ENCODE measurements at regions of chr15 and their contacts with region 1.

Region 1: DNA sequence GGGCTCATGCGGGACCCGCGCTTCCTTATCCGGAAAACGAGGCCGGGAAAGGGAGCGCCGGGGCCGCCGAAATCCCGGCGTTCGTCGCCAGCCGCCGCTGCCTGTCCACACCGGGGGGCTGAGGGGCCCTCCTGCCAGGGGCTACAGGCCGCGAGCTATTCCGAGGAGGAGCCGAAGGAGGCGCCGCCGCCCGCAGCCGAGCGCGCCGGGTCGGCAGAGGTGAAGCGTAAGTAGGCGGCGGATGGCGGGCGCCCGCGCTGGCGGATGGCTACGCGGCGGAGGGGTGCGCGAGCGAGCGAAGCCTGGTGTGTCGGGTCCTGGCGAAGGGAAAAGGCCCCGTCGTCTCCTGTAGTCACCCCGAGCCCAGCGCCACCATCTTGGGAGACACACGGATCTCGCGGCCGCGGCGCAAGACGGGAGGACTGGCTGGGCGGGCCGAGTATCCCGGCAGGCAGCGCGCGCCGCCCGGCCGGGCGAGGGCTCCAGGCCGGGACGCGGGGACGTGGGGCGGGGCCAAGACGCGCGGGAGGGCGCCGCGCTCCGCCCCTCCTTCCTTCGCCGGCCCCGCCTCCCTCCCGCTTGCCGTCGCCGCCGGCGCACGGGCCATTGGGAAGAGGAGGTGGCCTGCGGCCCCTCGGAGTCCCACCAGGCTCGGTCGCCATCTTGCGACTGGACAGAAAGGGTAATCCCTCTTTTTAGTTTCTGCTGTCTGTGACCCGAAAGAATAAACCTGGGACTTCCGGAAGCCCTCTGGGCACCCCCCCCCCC is at the start of gene UBE3A:
- DNase-seq: peak; percentile 60 to 94
- H3K4me3 ChIP-seq: peak within 1 kb of the TSS; percentile 93 to 99
- H3K27ac ChIP-seq: peak within 1 kb of the TSS; percentile 98 to 100
- H3K4me1 ChIP-seq: peaks cover 0 to 32% of the 10 kb centered on the region in 2 donors
- H3K27me3 ChIP-seq: no peaks in the 10 kb centered on the region
- CTCF ChIP-seq: peak; percentile 8 to 43 (median 17)
- total RNA-seq, gene UBE3A: 34.1 TPM

Region 2: GRCh38 chr15:25345943-25346342 is 92.8 kb before region 1 on chr15:
- intact Hi-C with region 1: loop called (anchors 2 kb)
- DNase-seq: peak; percentile 20 to 68
- H3K4me3 ChIP-seq: no peak overlapping the region
- H3K27ac ChIP-seq: peak overlapping the region; percentile 12 to 41
- H3K4me1 ChIP-seq: peaks cover 0 to 11% of the 10 kb centered on the region in 2 donors
- H3K27me3 ChIP-seq: no peaks in the 10 kb centered on the region
- CTCF ChIP-seq: peak in 1 of 3 experiments; percentile 51

Region 3: GRCh38 chr15:25362545-25362944 is 76.2 kb before region 1 on chr15:
- intact Hi-C with region 1: loop called (anchors 1 kb)
- DNase-seq: no peak
- H3K4me3 ChIP-seq: no peak overlapping the region
- H3K27ac ChIP-seq: peak overlapping the region; percentile 48 to 68
- H3K4me1 ChIP-seq: peaks cover 0 to 12% of the 10 kb centered on the region in 2 donors
- H3K27me3 ChIP-seq: no peaks in the 10 kb centered on the region
- CTCF ChIP-seq: no peak

Region 4: DNA sequence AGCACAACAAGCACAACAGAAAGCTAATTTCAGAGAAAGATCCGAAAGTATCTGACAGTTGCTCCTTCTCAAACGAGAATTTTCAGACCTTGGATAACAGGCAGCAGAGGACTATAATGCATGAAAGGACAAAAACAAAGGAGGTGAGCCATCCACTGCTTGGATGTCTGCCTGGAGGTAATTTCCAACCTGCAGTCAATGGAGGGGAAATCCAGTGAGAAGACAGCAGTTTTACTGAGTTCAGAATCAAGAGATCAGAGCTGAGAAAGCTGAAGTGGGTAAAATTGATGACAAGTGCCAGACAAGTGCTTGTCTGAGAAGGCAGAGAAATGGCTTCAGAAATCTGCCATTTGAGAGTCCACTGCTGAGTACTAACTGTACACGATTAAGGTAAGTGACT is 22.1 kb before region 1 on chr15:
- intact Hi-C with region 1: no loop called
- DNase-seq: no peak
- H3K4me3 ChIP-seq: no peak overlapping the region
- H3K27ac ChIP-seq: no peak overlapping the region
- H3K4me1 ChIP-seq: no peaks in the 10 kb centered on the region
- H3K27me3 ChIP-seq: no peaks in the 10 kb centered on the region
- CTCF ChIP-seq: no peak

Region 5: GRCh38 chr15:25790000-25790660 is 351.3 kb after region 1 on chr15:
- intact Hi-C with region 1: loop called (anchors 10 kb)
- DNase-seq: peak in 1 of 2 donors; percentile 84
- H3K4me3 ChIP-seq: no peak overlapping the region
- H3K27ac ChIP-seq: peak overlapping the region; percentile 64 to 71
- H3K4me1 ChIP-seq: peaks cover 8 to 41% of the 10 kb centered on the region in 2 donors
- H3K27me3 ChIP-seq: no peaks in the 10 kb centered on the region
- CTCF ChIP-seq: no peak

Region 6: DNA sequence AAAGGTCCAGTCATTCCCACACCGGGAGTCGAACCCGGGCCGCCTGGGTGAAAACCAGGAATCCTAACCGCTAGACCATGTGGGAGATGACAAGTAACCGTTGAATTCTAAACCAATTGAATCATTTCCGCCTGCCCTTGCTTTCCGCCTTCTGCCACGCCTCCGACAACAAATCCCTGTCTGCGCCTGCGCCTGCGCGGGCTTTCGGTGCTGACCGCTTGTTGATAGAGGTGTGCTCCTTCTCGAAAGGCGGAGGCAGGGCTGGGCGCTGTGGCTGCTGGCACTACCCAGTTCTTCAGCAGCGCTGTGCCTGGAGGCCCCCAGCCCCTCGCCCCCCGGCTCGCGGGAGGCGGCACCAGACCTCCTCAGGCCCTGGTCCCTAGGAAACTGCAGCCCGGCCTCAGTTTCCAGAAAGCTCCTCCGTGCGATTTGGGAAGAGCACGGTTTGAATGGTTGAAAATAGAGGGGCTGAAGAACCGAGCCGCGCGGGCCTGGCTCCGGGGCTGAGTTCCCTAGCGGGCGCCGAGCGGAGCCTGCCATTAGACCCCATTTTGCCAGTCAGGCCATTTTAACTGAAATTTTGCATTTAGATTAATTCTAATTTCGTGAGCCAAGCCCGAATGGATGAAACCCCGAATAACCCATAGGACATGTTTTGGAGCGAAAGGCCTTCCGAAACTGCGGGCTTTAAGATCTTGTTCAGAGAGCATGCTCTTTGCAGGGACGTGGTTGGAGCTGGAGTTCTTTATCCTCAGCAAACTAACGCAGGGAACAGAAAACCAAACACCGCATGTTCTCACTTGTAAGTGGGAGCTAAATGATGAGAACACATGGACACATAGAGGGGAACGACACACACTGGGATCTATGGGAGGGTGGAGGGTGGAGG is 643.7 kb after region 1 on chr15:
- intact Hi-C with region 1: loop called (anchors 5 kb)
- DNase-seq: peak; percentile 90 to 99
- H3K4me3 ChIP-seq: peak overlapping the region; percentile 68 to 89
- H3K27ac ChIP-seq: peak overlapping the region; percentile 89 to 92
- H3K4me1 ChIP-seq: peaks cover 0 to 7% of the 10 kb centered on the region in 2 donors
- H3K27me3 ChIP-seq: no peaks in the 10 kb centered on the region
- CTCF ChIP-seq: peak in 1 of 3 experiments; percentile 15